CD4-positive, alpha-beta memory T cell (primary cell): ENCODE measurements at regions of chr2 and their contacts with region 1.

Region 1: DNA sequence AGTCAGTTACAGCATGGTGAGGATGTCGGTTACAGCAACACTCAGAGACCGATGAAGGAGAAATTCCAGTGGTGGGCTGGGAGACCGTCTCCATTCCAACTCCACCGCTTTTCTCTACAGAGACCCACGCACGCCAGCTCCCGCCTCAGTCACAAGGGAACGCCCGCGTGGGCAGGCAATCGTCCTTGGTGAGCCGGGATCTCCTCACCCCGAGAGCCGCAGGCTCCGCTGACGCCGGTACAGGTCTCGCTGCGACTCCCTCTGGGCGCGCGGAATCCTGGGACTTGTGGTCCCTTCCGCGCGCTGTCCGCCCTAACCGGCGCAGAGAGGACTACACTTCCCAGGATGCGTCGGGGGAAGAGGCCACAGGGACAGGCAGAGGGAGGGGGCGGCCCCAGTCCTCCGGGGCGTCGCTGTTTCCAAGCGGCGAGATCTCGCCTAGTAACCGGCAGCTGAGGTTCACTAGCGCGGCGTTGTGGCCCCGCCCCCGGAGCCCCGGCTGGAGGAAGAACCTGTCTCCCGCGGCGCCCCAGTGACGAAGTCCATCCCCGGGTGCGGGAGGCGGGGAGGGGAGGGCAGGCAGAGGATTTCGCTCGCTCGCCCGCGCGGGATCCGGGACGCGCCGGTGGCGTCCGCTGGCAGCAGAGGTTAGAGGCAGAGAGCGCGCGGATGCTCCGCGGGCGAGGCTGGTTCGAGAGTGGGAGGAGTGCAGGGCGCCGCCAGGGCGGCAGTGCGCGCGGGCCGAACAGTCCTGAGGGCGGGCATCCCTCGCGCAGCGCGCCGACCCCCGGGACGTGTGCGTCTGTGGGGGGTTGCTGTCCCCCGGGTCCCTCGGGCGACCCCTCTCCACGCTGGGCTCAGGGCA is at the start of gene EML6:
- DNase-seq: peak; percentile 98 to 100 (median 98)
- H3K4me3 ChIP-seq: peak within 1 kb of the TSS; percentile 61 to 79
- H3K4me3 Mint-ChIP-seq: peak within 1 kb of the TSS; percentile 93 to 97 (median 94)
- H3K27ac ChIP-seq: peak within 1 kb of the TSS; percentile 53
- H3K27ac Mint-ChIP-seq: peak within 1 kb of the TSS; percentile 57 to 94 (median 92)
- H3K4me1 ChIP-seq: peaks cover 18% of the 10 kb centered on the region
- H3K4me1 Mint-ChIP-seq: peaks cover 8 to 29% (median 16%) of the 10 kb centered on the region in 4 donors
- H3K27me3 ChIP-seq: peaks cover 15% of the 10 kb centered on the region
- H3K27me3 Mint-ChIP-seq: peaks cover 16 to 25% of the 10 kb centered on the region in 2 donors
- total RNA-seq, gene EML6: 1.8 to 3.9 TPM

Region 2: GRCh38 chr2:53786705-53787612 is 936.4 kb before region 1 on chr2 and contains the starts of genes ASB3 and ERLEC1:
- CTCF ChIA-PET with region 1: no interaction called
- POLR2A ChIA-PET with region 1: no interaction called
- intact Hi-C with region 1: loop called (anchors 1 kb)
- DNase-seq: peak; percentile 85 to 90 (median 87)
- H3K4me3 ChIP-seq: peak within 1 kb of the TSS; percentile 80 to 96
- H3K4me3 Mint-ChIP-seq: peak within 1 kb of the TSS; percentile 91 to 100 (median 96)
- H3K27ac ChIP-seq: peak within 1 kb of the TSS; percentile 86
- H3K27ac Mint-ChIP-seq: peak within 1 kb of the TSS; percentile 90 to 99 (median 95)
- H3K4me1 ChIP-seq: peaks cover 49% of the 10 kb centered on the region
- H3K4me1 Mint-ChIP-seq: peaks cover 36 to 73% (median 52%) of the 10 kb centered on the region in 4 donors
- H3K27me3 ChIP-seq: no peaks in the 10 kb centered on the region
- H3K27me3 Mint-ChIP-seq: no peaks in the 10 kb centered on the region
- total RNA-seq, gene ASB3: 40.1 to 43.5 TPM
- total RNA-seq, gene ERLEC1: 32.4 to 33.6 TPM

Region 3: DNA sequence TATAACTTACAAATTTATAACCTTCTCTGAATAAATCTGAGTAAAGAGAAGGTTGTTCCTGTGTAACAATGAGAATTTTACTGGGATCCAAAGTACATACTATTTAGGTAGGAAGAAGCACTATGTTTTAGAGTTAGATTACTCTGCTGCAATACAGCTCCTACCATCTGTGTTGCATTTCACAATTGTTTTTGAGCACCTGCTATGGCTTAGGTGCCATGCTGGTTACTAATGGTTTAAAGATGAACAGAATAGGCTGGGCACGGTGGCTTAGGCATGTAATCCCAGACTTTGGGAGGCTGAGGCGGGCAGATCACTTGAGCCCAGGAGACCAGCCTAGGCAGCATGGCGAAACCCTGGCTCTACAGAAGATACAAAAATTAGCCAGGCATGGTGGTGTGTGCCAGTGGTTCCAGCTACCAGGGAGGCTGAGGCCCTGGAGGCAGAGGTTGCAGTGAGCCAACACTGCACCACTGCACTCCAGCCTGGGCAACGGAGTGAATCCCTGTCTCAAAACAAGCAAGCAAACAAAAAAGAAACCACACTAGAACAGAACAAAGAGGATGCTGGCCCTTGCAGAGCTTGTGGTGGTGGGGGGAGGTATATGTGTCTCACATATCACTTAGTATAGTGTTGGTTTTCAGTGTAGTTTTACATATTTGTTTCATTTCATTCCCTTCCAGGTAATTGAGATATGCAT is 210.6 kb before region 1 on chr2:
- CTCF ChIA-PET with region 1: no interaction called
- POLR2A ChIA-PET with region 1: no interaction called
- intact Hi-C with region 1: no loop called
- DNase-seq: no peak
- H3K4me3 ChIP-seq: no peak overlapping the region
- H3K4me3 Mint-ChIP-seq: no peak overlapping the region
- H3K27ac ChIP-seq: no peak overlapping the region
- H3K27ac Mint-ChIP-seq: no peak overlapping the region
- H3K4me1 ChIP-seq: no peaks in the 10 kb centered on the region
- H3K4me1 Mint-ChIP-seq: no peaks in the 10 kb centered on the region
- H3K27me3 ChIP-seq: no peaks in the 10 kb centered on the region
- H3K27me3 Mint-ChIP-seq: no peaks in the 10 kb centered on the region

Region 4: DNA sequence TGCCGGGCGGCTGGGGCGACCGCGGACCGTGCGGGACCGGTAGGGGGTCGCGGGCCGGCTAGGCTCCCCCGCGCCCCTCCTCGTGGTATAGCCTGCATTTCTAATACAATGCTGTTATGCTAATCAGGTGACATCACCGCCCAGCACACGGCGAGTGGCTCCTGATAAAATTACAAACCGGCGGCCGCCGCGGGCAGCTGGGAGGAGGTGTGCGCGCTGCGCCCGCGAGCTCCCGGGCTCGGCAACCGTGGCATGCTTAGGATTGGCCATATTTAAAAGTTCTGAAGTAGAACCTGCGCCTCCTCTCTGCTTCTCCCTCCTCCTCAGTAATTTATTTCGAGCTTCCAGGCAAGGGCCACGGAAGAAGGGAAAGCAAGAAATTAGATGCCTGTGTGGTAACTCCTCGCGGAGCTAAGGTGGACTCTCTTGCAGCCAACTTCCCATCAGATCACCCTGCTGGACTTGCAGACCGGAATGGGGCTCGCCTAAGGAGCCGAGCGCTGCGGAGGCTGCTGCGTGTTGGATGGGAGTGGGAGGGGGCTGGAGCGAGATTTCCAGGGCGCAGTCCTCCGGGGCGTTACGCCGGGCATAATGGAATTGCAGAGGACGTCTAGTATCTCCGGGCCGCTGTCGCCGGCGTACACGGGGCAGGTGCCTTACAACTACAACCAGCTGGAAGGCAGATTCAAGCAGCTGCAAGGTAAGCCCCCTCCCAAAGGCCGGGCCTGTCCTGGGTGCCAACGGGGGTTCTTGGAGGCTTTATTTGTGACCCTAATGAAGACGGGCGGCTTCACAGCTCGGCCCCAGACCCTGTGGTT is 165.0 kb before region 1 on chr2:
- CTCF ChIA-PET with region 1: interaction called, 4 read pairs
- POLR2A ChIA-PET with region 1: interaction called, 13 read pairs
- intact Hi-C with region 1: loop called (anchors 2 kb)
- DNase-seq: peak; percentile 74 to 85 (median 75)
- H3K4me3 ChIP-seq: peak overlapping the region; percentile 94 to 99
- H3K4me3 Mint-ChIP-seq: peak overlapping the region; percentile 94 to 100 (median 98)
- H3K27ac ChIP-seq: peak overlapping the region; percentile 83
- H3K27ac Mint-ChIP-seq: peak overlapping the region; percentile 88 to 97 (median 94)
- H3K4me1 ChIP-seq: peaks cover 32% of the 10 kb centered on the region
- H3K4me1 Mint-ChIP-seq: peaks cover 34 to 68% (median 40%) of the 10 kb centered on the region in 4 donors
- H3K27me3 ChIP-seq: no peaks in the 10 kb centered on the region
- H3K27me3 Mint-ChIP-seq: no peaks in the 10 kb centered on the region

Region 5: DNA sequence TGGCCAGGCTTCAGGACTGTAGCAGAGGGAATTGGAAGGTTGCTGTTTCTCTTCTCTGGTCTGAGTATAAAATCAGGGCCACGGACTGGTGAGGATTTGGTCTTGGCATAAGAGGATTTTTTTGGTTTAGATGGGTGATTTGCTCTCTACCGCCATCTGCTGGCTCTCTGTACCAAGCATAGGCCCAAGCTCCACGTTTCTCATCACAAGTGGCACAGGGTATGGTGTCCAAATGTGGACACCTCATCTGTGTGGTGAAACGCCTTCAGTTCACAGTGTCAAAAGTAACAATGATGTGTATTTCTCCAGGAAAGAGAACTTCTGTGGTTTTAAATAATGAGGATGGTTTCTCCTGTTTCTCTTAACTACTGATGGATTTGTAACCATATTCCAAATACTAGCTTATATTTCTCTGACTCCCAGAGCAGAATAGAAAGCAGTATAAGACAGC is 115.2 kb after region 1 on chr2:
- CTCF ChIA-PET with region 1: interaction called, 6 read pairs
- POLR2A ChIA-PET with region 1: no interaction called
- intact Hi-C with region 1: loop called (anchors 5 kb)
- DNase-seq: peak; percentile 40 to 51 (median 49)
- H3K4me3 ChIP-seq: no peak overlapping the region
- H3K4me3 Mint-ChIP-seq: no peak overlapping the region
- H3K27ac ChIP-seq: no peak overlapping the region
- H3K27ac Mint-ChIP-seq: no peak overlapping the region
- H3K4me1 ChIP-seq: no peaks in the 10 kb centered on the region
- H3K4me1 Mint-ChIP-seq: peaks cover 0 to 2% (median 0%) of the 10 kb centered on the region in 4 donors
- H3K27me3 ChIP-seq: no peaks in the 10 kb centered on the region
- H3K27me3 Mint-ChIP-seq: peaks cover 0 to 1% of the 10 kb centered on the region in 2 donors

Region 6: DNA sequence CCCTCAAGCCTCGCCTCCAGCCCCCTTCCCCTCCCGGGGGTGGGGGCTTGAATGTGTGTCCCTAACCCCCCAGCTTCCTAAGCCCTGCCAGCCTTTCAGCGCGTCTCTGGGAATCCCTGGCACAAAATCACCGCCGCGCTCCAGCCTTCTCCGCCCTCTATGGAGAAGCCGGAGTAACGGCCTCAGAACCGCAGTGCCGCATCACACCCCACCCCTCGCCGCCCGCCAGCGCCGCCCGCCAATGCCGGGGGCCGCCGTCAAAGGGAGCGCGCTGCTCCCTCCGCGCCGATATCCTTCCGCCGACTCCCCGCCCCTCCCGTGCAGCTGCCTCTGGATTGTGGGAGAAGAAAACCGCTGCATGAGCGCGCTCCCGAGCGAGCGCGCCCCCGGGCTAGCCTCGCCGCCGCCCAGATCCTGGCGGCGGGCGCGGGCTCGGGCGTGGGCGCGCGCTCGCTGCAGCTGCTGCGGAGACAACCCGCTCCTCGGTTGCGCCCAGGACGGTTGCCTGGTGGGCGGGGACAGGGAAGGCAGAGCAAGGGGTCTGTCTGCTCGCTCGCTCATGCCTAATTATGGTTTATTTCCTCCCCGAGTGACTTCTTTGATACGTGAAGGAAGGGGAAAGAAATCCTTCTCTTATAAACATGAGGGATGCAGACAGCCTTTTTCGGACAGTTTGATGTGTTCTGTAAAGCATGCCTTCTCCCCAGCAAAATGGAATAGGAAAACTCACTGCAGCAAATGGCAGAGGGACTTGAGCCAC is 696.5 kb after region 1 on chr2 and contains the start of gene CCDC88A:
- CTCF ChIA-PET with region 1: no interaction called
- POLR2A ChIA-PET with region 1: no interaction called
- intact Hi-C with region 1: loop called (anchors 10 kb)
- DNase-seq: peak; percentile 86 to 88 (median 86)
- H3K4me3 ChIP-seq: peak within 1 kb of the TSS; percentile 85 to 94
- H3K4me3 Mint-ChIP-seq: peak within 1 kb of the TSS; percentile 77 to 96 (median 94)
- H3K27ac ChIP-seq: peak within 1 kb of the TSS; percentile 57
- H3K27ac Mint-ChIP-seq: peak within 1 kb of the TSS; percentile 83 to 95 (median 91)
- H3K4me1 ChIP-seq: peaks cover 21% of the 10 kb centered on the region
- H3K4me1 Mint-ChIP-seq: peaks cover 20 to 41% (median 30%) of the 10 kb centered on the region in 4 donors
- H3K27me3 ChIP-seq: no peaks in the 10 kb centered on the region
- H3K27me3 Mint-ChIP-seq: peaks cover 1 to 2% of the 10 kb centered on the region in 2 donors
- total RNA-seq, gene CCDC88A: 18.7 to 19.1 TPM

Region 7: DNA sequence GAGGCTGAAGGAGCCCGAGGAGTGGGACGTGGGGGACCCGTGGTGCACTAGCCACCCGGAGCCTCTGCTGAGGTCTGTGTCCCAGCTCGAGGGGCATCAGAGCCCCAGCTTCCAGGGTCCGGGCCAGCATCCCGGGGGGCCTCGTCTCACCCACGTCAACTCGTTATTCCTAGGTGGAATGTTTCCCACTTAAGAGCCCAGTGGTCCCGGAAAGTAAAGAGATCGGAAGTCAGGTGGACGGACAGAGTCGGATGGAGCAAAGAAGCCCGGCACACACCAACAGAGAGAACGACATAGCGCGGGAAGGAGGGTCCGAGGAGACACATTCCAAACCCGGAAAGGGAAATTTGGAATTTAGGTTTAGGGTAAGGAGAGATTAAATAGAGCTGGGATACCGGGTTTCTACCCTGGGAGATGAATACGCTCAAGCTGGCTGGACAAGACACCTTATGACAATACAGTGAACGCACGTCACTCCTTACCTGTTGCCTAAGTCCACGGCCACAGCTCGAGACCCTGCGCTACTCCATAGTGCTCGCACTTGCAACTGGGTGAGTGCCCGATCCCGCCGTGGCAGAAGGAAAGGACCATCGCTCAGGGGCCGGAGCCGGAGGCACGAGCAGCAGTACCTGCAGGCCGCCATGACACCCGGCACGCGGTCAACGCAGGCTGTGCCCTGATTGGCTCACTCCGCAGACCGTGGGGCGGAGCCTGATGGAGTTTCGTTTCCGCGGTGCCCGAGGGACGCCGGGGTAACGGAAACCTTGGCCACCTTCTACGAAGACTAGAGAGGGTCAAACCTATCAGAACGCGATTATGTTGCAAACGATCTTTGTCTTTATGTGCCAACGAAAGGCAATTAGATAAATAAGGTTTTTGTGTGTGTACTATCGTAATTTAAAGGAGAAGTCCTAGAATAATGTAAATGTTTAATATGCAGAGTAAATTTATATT is 970.1 kb after region 1 on chr2 and contains the start of gene PNPT1:
- CTCF ChIA-PET with region 1: no interaction called
- POLR2A ChIA-PET with region 1: no interaction called
- intact Hi-C with region 1: loop called (anchors 5 kb)
- DNase-seq: peak; percentile 89 to 91 (median 89)
- H3K4me3 ChIP-seq: peak within 1 kb of the TSS; percentile 78 to 94
- H3K4me3 Mint-ChIP-seq: peak within 1 kb of the TSS; percentile 96 to 98 (median 98)
- H3K27ac ChIP-seq: peak within 1 kb of the TSS; percentile 74
- H3K27ac Mint-ChIP-seq: peak within 1 kb of the TSS; percentile 90 to 97 (median 93)
- H3K4me1 ChIP-seq: peaks cover 16% of the 10 kb centered on the region
- H3K4me1 Mint-ChIP-seq: peaks cover 29 to 44% (median 32%) of the 10 kb centered on the region in 4 donors
- H3K27me3 ChIP-seq: no peaks in the 10 kb centered on the region
- H3K27me3 Mint-ChIP-seq: peaks cover 0 to under 1% of the 10 kb centered on the region in 2 donors
- total RNA-seq, gene PNPT1: 21.9 to 26.5 TPM